Gastrocnemius medialis (tissue), 4 donors: ENCODE measurements at regions of chr14 and their contacts with region 1.

Region 1: GRCh38 chr14:74913986-74914573 is 9.0 kb downstream of the RPS6KL1 start:
- DNase-seq: peak; percentile 69 to 77
- ATAC-seq: peak; percentile 67 to 70
- H3K4me3 ChIP-seq: no peak overlapping the region
- H3K27ac ChIP-seq: peak overlapping the region; percentile 29 to 64 (median 52)
- H3K4me1 ChIP-seq: peaks cover 43 to 45% of the 10 kb centered on the region in 2 donors
- H3K27me3 ChIP-seq: no peaks in the 10 kb centered on the region
- CTCF ChIP-seq: peak; percentile 70 to 86 (median 82)
- POLR2A ChIP-seq: no peak

Region 2: DNA sequence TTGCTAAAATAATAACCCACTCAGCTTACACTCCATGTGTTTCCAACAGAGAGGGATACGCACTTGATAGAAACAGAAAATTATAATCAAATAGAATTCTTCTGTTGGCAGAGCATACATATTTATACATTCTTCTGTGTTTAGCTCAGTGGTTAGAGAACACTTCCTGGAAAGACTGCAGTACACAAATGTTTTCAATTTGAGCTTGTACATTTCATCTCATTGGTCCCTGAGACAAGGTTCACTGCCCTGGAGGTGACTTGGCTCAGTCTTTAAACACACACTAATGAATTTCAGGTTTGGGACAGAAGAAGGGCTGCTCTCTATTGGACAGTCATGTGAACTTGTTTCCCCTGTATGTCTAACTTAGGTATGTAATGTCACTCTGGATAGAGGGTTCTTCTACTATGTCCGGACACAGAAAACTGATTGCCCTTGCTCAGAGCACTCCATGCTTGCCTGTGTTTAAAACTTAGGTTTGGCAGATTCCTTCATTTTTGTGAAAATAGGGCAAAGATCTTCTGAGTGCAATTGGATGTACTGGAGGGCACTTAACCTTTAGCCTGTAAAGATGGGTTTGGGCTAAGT is 61.1 kb before region 1 on chr14:
- in situ Hi-C with region 1: no loop called
- intact Hi-C with region 1: no loop called
- DNase-seq: no peak
- ATAC-seq: no peak
- H3K4me3 ChIP-seq: no peak overlapping the region
- H3K27ac ChIP-seq: no peak overlapping the region
- H3K4me1 ChIP-seq: peaks cover 10 to 21% of the 10 kb centered on the region in 2 donors
- H3K27me3 ChIP-seq: no peaks in the 10 kb centered on the region
- CTCF ChIP-seq: no peak
- POLR2A ChIP-seq: no peak

Region 3: DNA sequence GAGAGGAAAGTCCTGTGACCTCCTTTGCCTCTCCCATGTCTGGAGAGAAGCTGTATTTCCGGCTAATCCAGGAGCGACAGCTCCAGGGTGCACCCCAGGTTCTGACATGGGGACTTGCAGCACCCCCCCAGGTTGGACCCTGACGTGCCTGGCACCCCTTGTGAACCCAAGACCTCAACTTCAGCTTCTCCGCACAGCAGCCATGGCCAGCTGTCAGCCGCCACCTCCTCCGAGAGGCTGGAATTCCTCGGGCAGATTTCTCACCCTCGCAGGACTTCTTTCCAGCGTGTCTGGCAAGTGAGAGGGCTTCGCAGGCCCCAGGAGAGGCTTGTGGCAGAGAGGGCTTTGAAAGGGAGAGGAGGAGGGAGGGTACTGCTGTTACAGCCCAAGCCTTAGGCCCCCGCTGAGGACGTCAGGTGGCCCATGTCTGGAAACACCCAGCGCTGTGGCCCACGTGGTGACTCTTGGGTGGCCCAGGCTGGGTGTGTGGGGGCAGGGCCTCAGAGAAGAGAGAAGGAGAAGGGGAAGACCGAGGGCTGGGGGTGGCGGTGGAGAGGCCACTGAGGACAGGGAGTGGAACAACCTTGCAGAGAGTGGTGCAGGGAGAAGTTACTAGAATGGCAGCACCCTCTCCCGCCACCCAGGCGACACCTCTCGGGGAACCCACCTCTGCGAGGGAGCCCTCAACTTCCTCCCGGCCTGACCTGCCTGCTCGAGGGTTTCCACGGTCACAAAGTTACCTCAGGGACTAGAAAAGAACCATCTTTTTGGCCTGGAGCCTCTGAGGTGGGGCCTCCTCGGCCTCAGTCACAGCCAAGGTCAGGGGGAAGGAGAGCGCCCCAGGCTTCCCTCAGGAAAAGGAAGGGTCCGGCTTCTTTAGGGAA is 20.6 kb after region 1 on chr14:
- in situ Hi-C with region 1: no loop called
- intact Hi-C with region 1: loop called (anchors 2 kb)
- DNase-seq: no peak
- ATAC-seq: peak in 1 of 2 donors; percentile 16
- H3K4me3 ChIP-seq: no peak overlapping the region
- H3K27ac ChIP-seq: peak overlapping the region; percentile 53 to 74 (median 56)
- H3K4me1 ChIP-seq: peaks cover 34 to 44% of the 10 kb centered on the region in 2 donors
- H3K27me3 ChIP-seq: no peaks in the 10 kb centered on the region
- CTCF ChIP-seq: no peak
- POLR2A ChIP-seq: no peak

Region 4: GRCh38 chr14:75011356-75011994 is 97.4 kb after region 1 on chr14:
- in situ Hi-C with region 1: no loop called
- intact Hi-C with region 1: loop called (anchors 5 kb)
- DNase-seq: no peak
- ATAC-seq: peak; percentile 77 to 93
- H3K4me3 ChIP-seq: no peak overlapping the region
- H3K27ac ChIP-seq: peak overlapping the region; percentile 58 to 78 (median 72)
- H3K4me1 ChIP-seq: peaks cover 17 to 19% of the 10 kb centered on the region in 2 donors
- H3K27me3 ChIP-seq: no peaks in the 10 kb centered on the region
- CTCF ChIP-seq: no peak
- POLR2A ChIP-seq: no peak